Activated naive CD4-positive, alpha-beta T cell treated with anti-CD3 and anti-CD28 coated beads for 36 hours (primary cell): ENCODE measurements at regions of chr18 and their contacts with region 1.

Region 1: GRCh38 chr18:74994502-74995419 is 214.2 kb downstream of the PTGR3 start:
- DNase-seq: peak; percentile 34
- H3K4me3 Mint-ChIP-seq: peak overlapping the region; percentile 30
- H3K27ac Mint-ChIP-seq: peak overlapping the region; percentile 50
- H3K4me1 Mint-ChIP-seq: peaks cover 41% of the 10 kb centered on the region
- H3K27me3 Mint-ChIP-seq: no peaks in the 10 kb centered on the region

Region 2: DNA sequence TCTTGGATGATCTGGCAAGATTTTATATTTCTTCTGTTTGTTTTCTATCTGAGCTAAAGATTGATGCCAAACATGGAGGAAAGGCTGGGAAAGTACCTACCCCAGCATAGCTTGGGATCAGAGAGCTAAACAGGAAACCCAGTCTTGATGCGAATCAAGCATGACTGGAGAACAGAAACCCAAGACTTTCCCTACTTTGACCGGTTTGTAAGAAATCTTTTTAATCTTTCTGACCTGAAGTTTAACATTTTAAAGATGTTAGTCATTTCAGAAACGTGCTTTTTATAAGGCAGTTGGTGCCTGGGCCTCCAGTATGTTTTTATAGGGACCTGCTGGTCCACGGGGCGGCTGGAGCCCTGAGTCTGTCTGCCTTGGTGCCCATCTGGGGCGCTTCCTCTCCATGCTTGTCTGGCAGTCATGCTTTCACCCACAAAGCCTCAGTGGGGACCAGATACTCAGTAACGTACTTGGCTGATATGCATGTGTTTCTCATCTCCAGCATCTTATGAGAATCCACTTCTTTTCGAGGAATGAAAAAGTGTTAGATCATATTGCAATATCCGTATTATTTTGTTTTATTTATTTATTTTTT is 52.3 kb before region 1 on chr18:
- CTCF ChIA-PET with region 1: no interaction called
- intact Hi-C with region 1: loop called (anchors 1 kb)
- DNase-seq: peak; percentile 49
- H3K4me3 Mint-ChIP-seq: no peak overlapping the region
- H3K27ac Mint-ChIP-seq: no peak overlapping the region
- H3K4me1 Mint-ChIP-seq: peaks cover 17% of the 10 kb centered on the region
- H3K27me3 Mint-ChIP-seq: no peaks in the 10 kb centered on the region

Region 3: GRCh38 chr18:74951165-74951760 is 43.5 kb before region 1 on chr18:
- CTCF ChIA-PET with region 1: no interaction called
- intact Hi-C with region 1: loop called (anchors 1 kb)
- DNase-seq: peak; percentile 47
- H3K4me3 Mint-ChIP-seq: no peak overlapping the region
- H3K27ac Mint-ChIP-seq: peak overlapping the region; percentile 18
- H3K4me1 Mint-ChIP-seq: peaks cover 22% of the 10 kb centered on the region
- H3K27me3 Mint-ChIP-seq: no peaks in the 10 kb centered on the region

Region 4: DNA sequence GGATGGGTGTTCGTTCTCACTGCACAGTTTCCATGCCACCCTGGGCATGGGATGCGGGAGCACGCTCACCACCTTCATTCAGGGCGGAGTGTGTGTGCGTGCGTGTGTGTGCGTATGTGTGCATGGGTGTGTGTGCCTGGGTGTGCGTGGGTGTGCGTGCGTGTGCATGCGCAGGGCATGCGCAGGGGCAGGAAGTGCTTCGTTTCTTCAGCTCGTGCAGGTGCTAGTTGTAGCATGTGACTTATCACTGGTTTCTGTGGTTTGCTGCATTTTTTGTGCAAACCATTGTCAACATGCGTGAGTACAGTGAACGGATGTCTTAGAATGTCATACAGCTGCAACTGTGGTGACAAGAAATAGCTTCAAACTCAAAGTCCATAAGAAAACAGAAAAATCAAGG is 34.7 kb after region 1 on chr18:
- CTCF ChIA-PET with region 1: no interaction called
- intact Hi-C with region 1: loop called (anchors 5 kb)
- DNase-seq: peak; percentile 45
- H3K4me3 Mint-ChIP-seq: no peak overlapping the region
- H3K27ac Mint-ChIP-seq: peak overlapping the region; percentile 6
- H3K4me1 Mint-ChIP-seq: peaks cover 22% of the 10 kb centered on the region
- H3K27me3 Mint-ChIP-seq: no peaks in the 10 kb centered on the region

Region 5: GRCh38 chr18:75036917-75037688 is 42.3 kb after region 1 on chr18:
- CTCF ChIA-PET with region 1: no interaction called
- intact Hi-C with region 1: loop called (anchors 1 kb)
- DNase-seq: no peak
- H3K4me3 Mint-ChIP-seq: no peak overlapping the region
- H3K27ac Mint-ChIP-seq: no peak overlapping the region
- H3K4me1 Mint-ChIP-seq: peaks cover 5% of the 10 kb centered on the region
- H3K27me3 Mint-ChIP-seq: no peaks in the 10 kb centered on the region

Region 6: DNA sequence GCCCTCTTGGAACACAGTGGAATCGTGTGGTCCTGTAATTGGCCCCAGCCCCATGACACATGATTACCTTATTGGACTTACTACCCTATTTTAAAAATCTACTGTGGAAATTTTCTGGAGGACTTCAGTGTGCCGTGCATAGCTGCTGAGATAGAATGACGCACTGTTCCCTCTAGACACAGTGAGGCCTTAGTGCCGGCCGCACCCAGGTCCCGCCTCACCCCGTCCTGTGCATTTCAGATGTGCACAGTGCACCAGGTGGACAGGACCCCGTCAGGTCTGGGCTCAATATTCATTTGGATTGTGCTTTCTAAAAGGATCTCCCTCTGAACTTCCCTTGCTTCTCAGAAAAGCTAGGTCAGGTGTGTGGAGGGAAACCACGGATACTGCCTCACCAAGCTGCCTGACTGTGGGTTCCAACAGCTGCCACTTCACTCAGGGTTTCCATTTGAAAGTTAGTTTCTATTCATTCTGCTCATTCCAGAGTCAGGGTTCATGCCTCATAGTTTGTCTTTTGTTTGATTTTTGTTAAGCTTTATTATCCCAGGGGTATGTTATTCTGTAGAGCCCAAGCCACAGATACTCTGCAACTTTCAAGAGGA is 58.4 kb after region 1 on chr18:
- CTCF ChIA-PET with region 1: no interaction called
- intact Hi-C with region 1: no loop called
- DNase-seq: no peak
- H3K4me3 Mint-ChIP-seq: no peak overlapping the region
- H3K27ac Mint-ChIP-seq: no peak overlapping the region
- H3K4me1 Mint-ChIP-seq: no peaks in the 10 kb centered on the region
- H3K27me3 Mint-ChIP-seq: no peaks in the 10 kb centered on the region

Region 7: GRCh38 chr18:75189696-75190095 is 194.9 kb after region 1 on chr18:
- CTCF ChIA-PET with region 1: no interaction called
- intact Hi-C with region 1: no loop called
- DNase-seq: no peak
- H3K4me3 Mint-ChIP-seq: no peak overlapping the region
- H3K27ac Mint-ChIP-seq: no peak overlapping the region
- H3K4me1 Mint-ChIP-seq: peaks cover 3% of the 10 kb centered on the region
- H3K27me3 Mint-ChIP-seq: no peaks in the 10 kb centered on the region

Region 8: DNA sequence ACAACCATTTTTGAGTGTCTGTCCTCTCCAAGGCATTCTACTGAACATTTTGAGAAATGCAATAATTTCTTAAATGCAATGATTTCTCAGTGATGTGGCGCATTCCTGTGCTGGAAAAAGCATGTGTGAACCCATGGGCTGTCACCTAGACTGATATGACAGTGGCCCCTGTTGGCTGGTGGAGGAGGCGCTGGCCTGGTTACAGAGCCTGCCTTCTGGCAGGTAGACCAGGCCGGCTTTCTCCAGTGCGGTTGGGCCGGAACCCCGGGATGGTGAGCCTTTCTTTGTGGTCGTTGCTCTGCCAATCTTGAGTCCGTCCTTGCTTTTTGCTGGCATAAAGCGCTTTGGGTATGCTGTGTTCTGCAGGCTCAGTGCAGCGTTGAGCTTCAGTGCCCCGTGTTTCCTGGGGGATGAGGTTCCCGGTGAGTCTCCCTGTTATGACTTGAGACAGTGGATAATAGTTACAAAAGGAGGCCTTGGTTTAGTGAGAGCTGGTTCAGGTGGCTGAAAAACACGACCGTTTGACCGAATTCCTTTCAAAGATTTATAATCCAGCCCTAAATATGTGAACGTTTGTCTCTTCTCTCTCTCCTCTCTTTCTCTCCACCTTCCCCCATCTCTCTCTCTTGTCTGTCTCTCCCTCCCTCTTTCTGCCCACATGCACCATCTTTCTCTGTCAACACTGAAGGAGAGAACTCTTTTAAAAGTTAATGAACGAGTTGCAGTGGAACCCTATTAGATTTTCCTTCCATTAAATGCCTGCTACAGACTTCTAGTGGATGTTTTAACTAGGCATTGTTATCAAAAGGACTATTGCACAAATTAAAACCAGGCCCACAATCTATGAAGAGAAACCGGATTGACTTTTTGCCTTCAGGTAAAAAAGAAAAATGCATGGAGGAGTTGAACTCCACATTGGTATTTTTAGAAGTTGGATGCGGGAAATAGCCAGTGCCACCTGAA is 249.9 kb after region 1 on chr18:
- CTCF ChIA-PET with region 1: no interaction called
- intact Hi-C with region 1: no loop called
- DNase-seq: peak; percentile 66
- H3K4me3 Mint-ChIP-seq: no peak overlapping the region
- H3K27ac Mint-ChIP-seq: no peak overlapping the region
- H3K4me1 Mint-ChIP-seq: peaks cover 56% of the 10 kb centered on the region
- H3K27me3 Mint-ChIP-seq: no peaks in the 10 kb centered on the region

Region 9: GRCh38 chr18:75538727-75539126 is 544.0 kb after region 1 on chr18:
- CTCF ChIA-PET with region 1: no interaction called
- intact Hi-C with region 1: no loop called
- DNase-seq: no peak
- H3K4me3 Mint-ChIP-seq: no peak overlapping the region
- H3K27ac Mint-ChIP-seq: no peak overlapping the region
- H3K4me1 Mint-ChIP-seq: no peaks in the 10 kb centered on the region
- H3K27me3 Mint-ChIP-seq: peaks cover 18% of the 10 kb centered on the region